ENCODE measurements at regions of chr12 and their contacts with region 1.

Region 1: GRCh38 chr12:91877022-91877421 is 268.6 kb downstream of the BTG1 start:
- DNase-seq: peak; percentile 87 to 98 (median 93)
- H3K4me3 ChIP-seq: peak overlapping the region; percentile 9 to 14
- H3K4me3 Mint-ChIP-seq: peak overlapping the region; percentile 73 to 86 (median 79)
- H3K27ac ChIP-seq: peak overlapping the region; percentile 93
- H3K27ac Mint-ChIP-seq: peak overlapping the region; percentile 99 to 100 (median 100)
- H3K4me1 ChIP-seq: peaks cover 76% of the 10 kb centered on the region
- H3K4me1 Mint-ChIP-seq: peaks cover 54 to 79% (median 64%) of the 10 kb centered on the region in 4 donors
- H3K27me3 ChIP-seq: no peaks in the 10 kb centered on the region
- H3K27me3 Mint-ChIP-seq: no peaks in the 10 kb centered on the region

Region 2: DNA sequence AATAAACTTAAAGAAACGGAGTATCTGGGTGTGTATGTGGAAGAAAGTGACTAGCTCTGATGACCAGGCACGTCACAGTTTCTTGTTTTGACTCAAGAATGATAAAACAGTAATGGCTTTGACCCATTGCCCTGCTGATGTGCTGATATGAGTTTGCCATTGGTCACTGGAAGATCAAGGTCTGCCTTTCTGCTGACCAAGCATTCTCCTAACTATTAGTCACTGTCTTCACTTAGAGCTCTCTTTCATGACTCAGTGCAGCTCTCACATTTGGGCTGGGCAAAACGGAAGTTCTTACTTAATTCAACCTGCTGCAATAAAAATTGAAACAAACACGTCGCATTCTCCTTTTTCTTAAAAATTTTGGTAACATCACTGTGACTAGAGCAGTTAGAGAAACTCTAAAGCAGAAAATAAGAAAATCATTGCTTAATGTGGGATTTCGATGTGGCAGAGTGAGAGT is 98.1 kb before region 1 on chr12:
- CTCF ChIA-PET with region 1: no interaction called
- POLR2A ChIA-PET with region 1: interaction called, 11 read pairs
- intact Hi-C with region 1: no loop called
- DNase-seq: peak; percentile 23 to 71 (median 32)
- H3K4me3 ChIP-seq: peak overlapping the region; percentile 7 to 14
- H3K4me3 Mint-ChIP-seq: peak overlapping the region; percentile 72 to 88 (median 82)
- H3K27ac ChIP-seq: peak overlapping the region; percentile 49
- H3K27ac Mint-ChIP-seq: peak overlapping the region; percentile 70 to 95 (median 90)
- H3K4me1 ChIP-seq: peaks cover 35% of the 10 kb centered on the region
- H3K4me1 Mint-ChIP-seq: peaks cover 24 to 31% (median 27%) of the 10 kb centered on the region in 4 donors
- H3K27me3 ChIP-seq: no peaks in the 10 kb centered on the region
- H3K27me3 Mint-ChIP-seq: no peaks in the 10 kb centered on the region

Region 3: DNA sequence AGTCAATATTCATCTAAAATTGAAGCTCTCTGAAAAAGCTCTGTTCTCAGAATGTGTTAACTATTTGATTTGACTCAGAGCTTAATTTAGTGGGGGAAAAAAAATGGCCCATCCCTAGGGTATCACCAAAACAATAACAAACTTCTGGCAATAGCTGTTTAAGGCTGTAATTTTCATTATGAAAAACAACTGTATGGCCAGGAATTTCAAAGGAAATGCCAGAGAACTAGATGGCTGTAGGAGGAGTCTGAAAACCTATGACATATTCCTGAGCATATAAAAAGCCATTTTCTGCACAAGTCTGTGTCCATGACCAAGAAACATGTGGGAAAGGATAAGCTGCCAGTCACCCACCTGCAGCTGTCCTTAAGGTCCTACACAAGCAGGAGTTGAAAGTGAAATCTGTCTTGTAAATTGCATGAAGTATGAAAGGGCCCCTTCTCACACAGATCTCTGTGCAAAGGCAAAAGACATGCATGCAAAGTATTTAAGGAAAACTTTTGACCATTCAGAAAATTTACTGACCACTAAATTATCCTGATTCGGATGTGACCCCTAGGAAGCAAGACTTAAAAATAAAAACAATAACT is 30.5 kb before region 1 on chr12:
- CTCF ChIA-PET with region 1: no interaction called
- POLR2A ChIA-PET with region 1: no interaction called
- intact Hi-C with region 1: no loop called
- DNase-seq: no peak
- H3K4me3 ChIP-seq: no peak overlapping the region
- H3K4me3 Mint-ChIP-seq: peak overlapping the region in 1 of 8 donors; percentile 10
- H3K27ac ChIP-seq: no peak overlapping the region
- H3K27ac Mint-ChIP-seq: no peak overlapping the region
- H3K4me1 ChIP-seq: no peaks in the 10 kb centered on the region
- H3K4me1 Mint-ChIP-seq: peaks cover 0 to 2% (median 1%) of the 10 kb centered on the region in 4 donors
- H3K27me3 ChIP-seq: no peaks in the 10 kb centered on the region
- H3K27me3 Mint-ChIP-seq: no peaks in the 10 kb centered on the region

Region 4: DNA sequence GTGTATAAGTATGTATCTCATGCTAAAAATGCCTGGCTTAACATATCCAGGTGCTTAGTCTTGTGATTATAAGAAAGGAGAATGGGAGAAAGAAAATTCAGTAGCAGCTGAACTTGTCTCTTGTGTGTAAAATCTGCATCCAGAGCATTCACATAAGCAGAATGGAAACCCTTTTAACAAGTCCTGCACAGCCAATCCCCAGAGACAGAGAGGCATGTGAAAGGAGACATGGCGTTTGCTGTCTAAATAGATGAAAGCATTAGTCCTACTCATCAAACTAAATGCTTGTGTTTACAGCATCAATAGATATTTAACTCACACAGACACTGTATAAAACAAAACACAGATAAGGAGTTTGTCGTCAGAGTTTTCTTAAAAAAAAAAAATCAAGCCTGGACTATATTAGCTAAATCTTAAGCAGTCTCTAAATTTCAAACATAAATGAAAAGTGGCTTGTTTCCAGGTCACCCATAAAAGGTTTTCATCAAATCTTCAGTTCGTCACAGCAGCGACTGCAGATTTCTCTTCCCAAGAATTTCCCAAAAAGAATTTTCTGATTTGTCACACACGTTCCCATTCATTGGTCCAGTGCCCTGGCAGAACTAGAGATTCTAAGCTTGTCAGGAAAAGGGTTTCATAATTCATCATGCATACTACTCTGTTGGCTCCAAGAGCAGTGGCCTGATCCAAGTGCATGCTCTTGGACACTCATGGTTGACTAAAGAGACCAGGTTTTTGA is 19.4 kb after region 1 on chr12:
- CTCF ChIA-PET with region 1: no interaction called
- POLR2A ChIA-PET with region 1: interaction called, 15 read pairs
- intact Hi-C with region 1: no loop called
- DNase-seq: no peak
- H3K4me3 ChIP-seq: no peak overlapping the region
- H3K4me3 Mint-ChIP-seq: no peak overlapping the region
- H3K27ac ChIP-seq: no peak overlapping the region
- H3K27ac Mint-ChIP-seq: no peak overlapping the region
- H3K4me1 ChIP-seq: no peaks in the 10 kb centered on the region
- H3K4me1 Mint-ChIP-seq: peaks cover 0 to 6% (median 4%) of the 10 kb centered on the region in 4 donors
- H3K27me3 ChIP-seq: no peaks in the 10 kb centered on the region
- H3K27me3 Mint-ChIP-seq: no peaks in the 10 kb centered on the region

Region 5: DNA sequence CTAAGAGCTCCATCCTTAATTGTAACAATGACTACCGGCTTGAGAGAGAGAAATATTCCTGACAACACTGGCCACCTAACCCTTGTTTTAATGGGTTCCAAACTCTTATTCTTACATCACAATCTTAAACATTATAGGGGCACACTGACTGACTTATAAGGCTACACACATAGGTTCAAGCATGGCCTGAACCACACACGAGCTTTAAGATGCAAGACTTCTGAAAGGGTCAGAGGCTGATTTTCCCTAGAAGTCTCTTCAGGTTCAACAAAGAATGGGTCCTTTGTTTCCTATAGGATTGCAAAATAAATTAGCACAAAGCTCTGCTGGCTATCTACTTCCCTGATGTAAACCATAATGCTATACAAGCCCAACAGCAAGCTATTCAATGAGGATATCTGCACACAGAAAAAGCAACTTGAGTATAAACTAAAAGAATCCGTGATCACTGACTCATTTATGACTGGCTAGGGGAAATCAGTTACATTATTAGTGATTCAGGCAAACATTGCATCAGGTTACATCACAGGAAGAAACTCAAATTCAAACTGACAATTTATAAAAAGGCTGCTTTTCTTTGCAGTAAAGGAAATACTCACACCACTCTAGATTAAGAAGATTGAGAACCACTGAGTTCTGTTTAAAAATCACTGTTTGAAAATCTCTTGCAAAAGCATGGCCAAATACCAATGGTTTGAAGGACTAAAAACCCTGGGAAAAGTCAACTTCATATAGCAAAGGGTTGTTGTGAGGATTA is 260.1 kb after region 1 on chr12:
- CTCF ChIA-PET with region 1: interaction called, 3 read pairs
- POLR2A ChIA-PET with region 1: interaction called, 239 read pairs
- intact Hi-C with region 1: no loop called
- DNase-seq: no peak
- H3K4me3 ChIP-seq: peak overlapping the region; percentile 83 to 89
- H3K4me3 Mint-ChIP-seq: peak overlapping the region; percentile 87 to 100 (median 100)
- H3K27ac ChIP-seq: peak overlapping the region; percentile 86
- H3K27ac Mint-ChIP-seq: peak overlapping the region; percentile 83 to 100 (median 99)
- H3K4me1 ChIP-seq: peaks cover 52% of the 10 kb centered on the region
- H3K4me1 Mint-ChIP-seq: peaks cover 43 to 59% (median 49%) of the 10 kb centered on the region in 4 donors
- H3K27me3 ChIP-seq: no peaks in the 10 kb centered on the region
- H3K27me3 Mint-ChIP-seq: no peaks in the 10 kb centered on the region

Region 6: DNA sequence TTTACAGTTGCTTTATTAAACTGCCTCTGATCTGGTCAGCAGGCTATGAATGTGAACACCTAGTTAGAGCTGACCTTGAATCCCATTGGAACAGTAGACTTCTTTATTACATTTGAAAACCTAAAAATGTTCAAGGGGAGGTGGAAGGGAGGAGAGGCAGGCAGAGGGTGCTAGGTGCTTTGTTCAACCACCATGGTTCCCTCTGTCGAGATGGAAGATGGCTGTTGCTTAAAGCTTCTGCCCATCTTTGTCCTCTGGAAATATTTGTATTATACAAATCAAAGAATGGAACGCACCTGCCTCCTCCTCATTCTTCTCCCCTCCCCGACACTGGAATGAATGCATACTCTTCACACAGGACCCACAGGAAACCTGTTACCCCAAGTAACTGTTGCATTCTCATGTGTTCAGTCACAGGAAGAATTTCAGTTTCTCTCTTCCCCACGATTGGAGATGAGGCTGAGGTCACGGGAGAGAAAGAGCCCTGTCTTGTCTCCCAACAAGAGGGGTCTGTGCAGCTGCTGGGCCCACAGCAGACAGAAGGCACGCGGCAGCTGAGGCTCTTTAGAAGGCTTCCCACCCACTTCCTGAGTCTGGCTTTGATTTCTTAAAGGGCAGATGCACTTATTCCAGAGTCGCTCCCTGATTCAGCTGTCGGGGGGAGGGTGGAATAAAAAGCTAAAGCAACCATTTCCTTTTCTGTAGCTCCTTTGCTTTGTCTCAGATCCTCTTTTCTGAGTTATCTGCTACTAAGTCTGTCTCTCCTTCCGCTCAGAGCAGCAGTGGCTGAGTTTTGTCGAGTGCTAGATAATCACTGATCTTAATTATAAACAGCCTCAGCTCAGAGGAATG is 486.5 kb after region 1 on chr12:
- CTCF ChIA-PET with region 1: no interaction called
- POLR2A ChIA-PET with region 1: interaction called, 3 read pairs
- intact Hi-C with region 1: loop called (anchors 1 kb)
- DNase-seq: peak; percentile 40 to 76 (median 49)
- H3K4me3 ChIP-seq: peak overlapping the region; percentile 14 to 34
- H3K4me3 Mint-ChIP-seq: peak overlapping the region; percentile 44 to 92 (median 78)
- H3K27ac ChIP-seq: peak overlapping the region; percentile 41
- H3K27ac Mint-ChIP-seq: peak overlapping the region; percentile 85 to 97 (median 94)
- H3K4me1 ChIP-seq: peaks cover 66% of the 10 kb centered on the region
- H3K4me1 Mint-ChIP-seq: peaks cover 42 to 75% (median 60%) of the 10 kb centered on the region in 4 donors
- H3K27me3 ChIP-seq: no peaks in the 10 kb centered on the region
- H3K27me3 Mint-ChIP-seq: no peaks in the 10 kb centered on the region

Region 7: GRCh38 chr12:92593734-92594402 is 716.8 kb after region 1 on chr12:
- CTCF ChIA-PET with region 1: no interaction called
- POLR2A ChIA-PET with region 1: interaction called, 8 read pairs
- intact Hi-C with region 1: loop called (anchors 1 kb)
- DNase-seq: peak; percentile 87 to 97 (median 94)
- H3K4me3 ChIP-seq: peak overlapping the region in 1 of 2 donors; percentile 37
- H3K4me3 Mint-ChIP-seq: peak overlapping the region in 7 of 8 donors; percentile 43 to 88 (median 71)
- H3K27ac ChIP-seq: peak overlapping the region; percentile 91
- H3K27ac Mint-ChIP-seq: peak overlapping the region; percentile 86 to 100 (median 100)
- H3K4me1 ChIP-seq: peaks cover 35% of the 10 kb centered on the region
- H3K4me1 Mint-ChIP-seq: peaks cover 27 to 38% (median 35%) of the 10 kb centered on the region in 4 donors
- H3K27me3 ChIP-seq: no peaks in the 10 kb centered on the region
- H3K27me3 Mint-ChIP-seq: no peaks in the 10 kb centered on the region

Measured in CD4-positive, alpha-beta memory T cell (primary cell).